PC-3 (cell line): ENCODE measurements at regions of chr5 and their contacts with region 1.

Region 1: GRCh38 chr5:145825751-145826180 is 9.4 kb downstream of the PRELID2 start:
- DNase-seq: peak; percentile 66
- ATAC-seq: peak; percentile 58
- H3K4me3 ChIP-seq: no peak overlapping the region
- H3K27ac ChIP-seq: no peak overlapping the region
- H3K4me1 ChIP-seq: peaks cover 14% of the 10 kb centered on the region; the same call in 1 of the 2 replicates
- H3K27me3 ChIP-seq: no peaks in the 10 kb centered on the region
- CTCF ChIP-seq: peak; percentile 91

Region 2: GRCh38 chr5:145697251-145697990 is 128.3 kb before region 1 on chr5:
- CTCF ChIA-PET with region 1: no interaction called
- POLR2A ChIA-PET with region 1: no interaction called
- intact Hi-C with region 1: loop called (anchors 1 kb)
- DNase-seq: peak; percentile 60
- ATAC-seq: peak; percentile 63
- H3K4me3 ChIP-seq: no peak overlapping the region
- H3K27ac ChIP-seq: no peak overlapping the region
- H3K4me1 ChIP-seq: no peaks in the 10 kb centered on the region
- H3K27me3 ChIP-seq: no peaks in the 10 kb centered on the region
- CTCF ChIP-seq: peak; percentile 69